T-cell (primary cell): ENCODE measurements at regions of chr16 and their contacts with region 1.

Region 1: GRCh38 chr16:81585785-81586184 is 141.2 kb downstream of the CMIP start:
- DNase-seq: no peak
- ATAC-seq: no peak
- H3K4me3 ChIP-seq: no peak overlapping the region
- H3K4me3 Mint-ChIP-seq: no peak overlapping the region
- H3K27ac ChIP-seq: no peak overlapping the region
- H3K27ac Mint-ChIP-seq: no peak overlapping the region
- H3K4me1 ChIP-seq: peaks cover 0 to 6% of the 10 kb centered on the region in 2 experiments
- H3K4me1 Mint-ChIP-seq: peaks cover 14 to 34% (median 28%) of the 10 kb centered on the region in 3 donors
- H3K27me3 ChIP-seq: no peaks in the 10 kb centered on the region
- H3K27me3 Mint-ChIP-seq: no peaks in the 10 kb centered on the region

Region 2: GRCh38 chr16:80974649-80975376 is 611.0 kb before region 1 on chr16:
- CTCF ChIA-PET with region 1: no interaction called
- POLR2A ChIA-PET with region 1: interaction called in 1 of 2 experiments, 13 read pairs
- DNase-seq: peak in 1 of 35 experiments; percentile 8
- ATAC-seq: no peak
- H3K4me3 ChIP-seq: no peak overlapping the region
- H3K4me3 Mint-ChIP-seq: no peak overlapping the region
- H3K27ac ChIP-seq: no peak overlapping the region
- H3K27ac Mint-ChIP-seq: no peak overlapping the region
- H3K4me1 ChIP-seq: no peaks in the 10 kb centered on the region
- H3K4me1 Mint-ChIP-seq: peaks cover 0 to 9% (median 0%) of the 10 kb centered on the region in 3 donors
- H3K27me3 ChIP-seq: no peaks in the 10 kb centered on the region
- H3K27me3 Mint-ChIP-seq: no peaks in the 10 kb centered on the region

Region 3: GRCh38 chr16:81551151-81551808 is 34.5 kb before region 1 on chr16:
- CTCF ChIA-PET with region 1: no interaction called
- POLR2A ChIA-PET with region 1: no interaction called
- DNase-seq: peak in 1 of 35 experiments; percentile 32
- ATAC-seq: peak in 1 of 4 experiments; percentile 24
- H3K4me3 ChIP-seq: no peak overlapping the region
- H3K4me3 Mint-ChIP-seq: no peak overlapping the region
- H3K27ac ChIP-seq: no peak overlapping the region
- H3K27ac Mint-ChIP-seq: peak overlapping the region; percentile 14 to 19
- H3K4me1 ChIP-seq: peaks cover 0 to 56% of the 10 kb centered on the region in 2 experiments
- H3K4me1 Mint-ChIP-seq: peaks cover 45 to 63% (median 48%) of the 10 kb centered on the region in 3 donors
- H3K27me3 ChIP-seq: no peaks in the 10 kb centered on the region
- H3K27me3 Mint-ChIP-seq: no peaks in the 10 kb centered on the region

Region 4: GRCh38 chr16:81808933-81809496 is 223.2 kb after region 1 on chr16:
- CTCF ChIA-PET with region 1: no interaction called
- POLR2A ChIA-PET with region 1: no interaction called
- DNase-seq: peak in 8 of 35 experiments; percentile 10 to 41 (median 24)
- ATAC-seq: peak; percentile 37 to 46 (median 42)
- H3K4me3 ChIP-seq: no peak overlapping the region
- H3K4me3 Mint-ChIP-seq: no peak overlapping the region
- H3K27ac ChIP-seq: peak overlapping the region; percentile 5
- H3K27ac Mint-ChIP-seq: no peak overlapping the region
- H3K4me1 ChIP-seq: peaks cover 0 to 36% of the 10 kb centered on the region in 2 experiments
- H3K4me1 Mint-ChIP-seq: peaks cover 0 to 51% (median 5%) of the 10 kb centered on the region in 3 donors
- H3K27me3 ChIP-seq: no peaks in the 10 kb centered on the region
- H3K27me3 Mint-ChIP-seq: peaks cover 0 to 6% of the 10 kb centered on the region in 2 donors